ENCODE measurements at regions of chr4 and their contacts with region 1.

Region 1: GRCh38 chr4:26613237-26613636 is 29.4 kb downstream of the TBC1D19 start:
- DNase-seq: no peak
- H3K4me3 ChIP-seq: no peak overlapping the region
- H3K27ac ChIP-seq: no peak overlapping the region
- H3K4me1 ChIP-seq: peaks cover 0 to 10% (median 7%) of the 10 kb centered on the region in 4 donors
- H3K27me3 ChIP-seq: no peaks in the 10 kb centered on the region
- CTCF ChIP-seq: no peak
- EP300 ChIP-seq: no peak
- POLR2A ChIP-seq: no peak

Region 2: GRCh38 chr4:26576231-26576739 is 37.0 kb before region 1 on chr4:
- intact Hi-C with region 1: loop called (anchors 5 kb)
- DNase-seq: no peak
- H3K4me3 ChIP-seq: no peak overlapping the region
- H3K27ac ChIP-seq: no peak overlapping the region
- H3K4me1 ChIP-seq: peaks cover 0 to 15% (median 5%) of the 10 kb centered on the region in 4 donors
- H3K27me3 ChIP-seq: no peaks in the 10 kb centered on the region
- CTCF ChIP-seq: no peak
- EP300 ChIP-seq: no peak
- POLR2A ChIP-seq: no peak